MCF 10A (cell line): ENCODE measurements at regions of chr1 and their contacts with region 1.

Region 1: DNA sequence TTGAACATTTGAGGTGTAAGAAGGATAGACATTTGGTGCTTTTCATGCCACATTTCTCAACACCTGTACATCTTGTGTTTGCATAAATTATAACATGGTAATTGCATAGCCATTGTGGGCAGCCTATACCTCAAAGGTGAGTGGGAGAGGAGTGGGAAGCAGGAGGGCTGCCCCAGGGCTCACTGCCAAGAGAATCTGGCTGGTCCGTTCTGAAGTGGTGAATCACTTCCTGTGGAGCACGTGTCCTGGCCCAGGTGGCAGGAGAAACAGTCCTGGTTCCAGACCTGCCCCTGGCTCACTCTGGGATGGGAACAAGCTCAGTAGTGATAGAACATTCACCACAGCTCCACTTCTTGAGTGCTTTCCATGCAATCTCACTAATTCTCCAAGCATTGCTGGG is 11.6 kb upstream of the OLFML2B start:
- DNase-seq: peak; percentile 89
- H3K4me3 Mint-ChIP-seq: no peak overlapping the region
- H3K27ac Mint-ChIP-seq: no peak overlapping the region
- H3K4me1 Mint-ChIP-seq: peaks cover under 1% of the 10 kb centered on the region
- H3K27me3 Mint-ChIP-seq: peaks cover 11% of the 10 kb centered on the region
- CTCF ChIP-seq: no peak

Region 2: DNA sequence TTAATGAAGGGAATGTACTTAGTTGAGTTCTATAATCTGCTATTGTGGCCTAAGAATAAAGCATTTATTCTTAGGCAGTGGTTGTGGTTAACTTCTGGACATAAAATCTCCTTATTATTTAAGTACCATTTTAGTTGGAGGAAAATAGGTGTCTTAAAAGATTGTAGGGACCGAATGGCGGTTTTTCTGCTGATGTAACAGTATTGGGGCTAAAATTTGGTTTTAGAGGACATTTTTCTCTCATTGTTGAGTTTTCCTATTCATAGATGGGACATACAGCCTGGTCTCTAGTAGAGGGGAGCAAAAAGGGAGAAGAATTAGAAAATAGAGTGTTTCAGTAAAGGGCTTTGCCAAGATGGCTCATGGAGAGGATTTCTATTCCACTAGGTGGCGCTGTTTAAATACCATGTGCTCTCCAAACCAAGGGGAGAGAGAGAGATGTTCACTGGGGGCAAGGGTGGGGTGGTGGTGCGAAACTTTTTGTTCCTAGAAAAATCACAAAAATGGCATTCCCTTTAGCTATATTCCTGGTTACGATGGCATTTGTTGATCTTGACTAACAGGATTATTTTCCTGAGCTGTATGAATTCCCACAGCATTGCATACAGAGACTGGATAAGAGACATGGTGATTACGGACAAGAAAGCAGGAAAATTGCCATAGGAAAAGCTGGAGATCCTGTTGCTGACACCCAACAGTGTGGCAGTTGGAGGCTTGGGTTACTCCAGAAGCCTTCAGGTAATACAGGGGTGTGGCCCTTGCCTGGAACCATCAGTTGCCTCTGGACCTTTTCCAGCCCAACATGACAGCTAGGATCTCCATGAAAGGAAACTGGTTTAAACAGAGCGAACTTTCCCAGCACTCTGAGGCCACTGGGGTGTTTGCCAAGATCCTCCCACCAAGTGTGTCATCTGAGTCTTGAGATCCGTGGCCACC is 548.2 kb before region 1 on chr1:
- CTCF ChIA-PET with region 1: interaction called, 3 read pairs
- POLR2A ChIA-PET with region 1: no interaction called
- intact Hi-C with region 1: loop called (anchors 10 kb)
- DNase-seq: peak; percentile 98
- H3K4me3 Mint-ChIP-seq: peak overlapping the region; percentile 41
- H3K27ac Mint-ChIP-seq: no peak overlapping the region
- H3K4me1 Mint-ChIP-seq: no peaks in the 10 kb centered on the region
- H3K27me3 Mint-ChIP-seq: peaks cover 39% of the 10 kb centered on the region
- CTCF ChIP-seq: peak; percentile 87

Region 3: GRCh38 chr1:161787355-161787754 is 247.9 kb before region 1 on chr1:
- CTCF ChIA-PET with region 1: interaction called, 508 read pairs
- POLR2A ChIA-PET with region 1: interaction called, 67 read pairs
- intact Hi-C with region 1: loop called (anchors 1 kb)
- DNase-seq: no peak
- H3K4me3 Mint-ChIP-seq: no peak overlapping the region
- H3K27ac Mint-ChIP-seq: peak overlapping the region; percentile 8
- H3K4me1 Mint-ChIP-seq: peaks cover 11% of the 10 kb centered on the region
- H3K27me3 Mint-ChIP-seq: no peaks in the 10 kb centered on the region
- CTCF ChIP-seq: no peak

Region 4: DNA sequence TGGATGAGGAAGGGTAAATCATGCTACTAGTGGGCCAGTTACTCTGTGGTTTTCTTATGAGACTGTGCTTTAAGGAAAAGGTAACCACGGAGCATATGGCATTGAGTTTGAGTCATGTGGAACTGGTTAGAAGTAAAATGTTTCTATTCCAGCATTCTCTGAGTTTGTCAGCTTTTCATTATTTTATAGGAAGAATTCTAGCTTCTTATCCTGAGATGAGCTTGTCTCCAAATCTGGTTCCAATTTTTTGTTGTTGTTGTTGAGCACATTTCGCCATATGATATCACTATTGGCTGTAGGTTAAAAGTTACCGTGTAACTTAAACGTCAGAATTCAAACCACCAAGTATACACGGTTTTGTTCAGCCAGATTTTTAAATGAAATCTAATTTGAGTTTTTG is 199.2 kb before region 1 on chr1:
- CTCF ChIA-PET with region 1: interaction called, 11 read pairs
- POLR2A ChIA-PET with region 1: no interaction called
- intact Hi-C with region 1: no loop called
- DNase-seq: no peak
- H3K4me3 Mint-ChIP-seq: no peak overlapping the region
- H3K27ac Mint-ChIP-seq: no peak overlapping the region
- H3K4me1 Mint-ChIP-seq: no peaks in the 10 kb centered on the region
- H3K27me3 Mint-ChIP-seq: no peaks in the 10 kb centered on the region
- CTCF ChIP-seq: no peak

Region 5: DNA sequence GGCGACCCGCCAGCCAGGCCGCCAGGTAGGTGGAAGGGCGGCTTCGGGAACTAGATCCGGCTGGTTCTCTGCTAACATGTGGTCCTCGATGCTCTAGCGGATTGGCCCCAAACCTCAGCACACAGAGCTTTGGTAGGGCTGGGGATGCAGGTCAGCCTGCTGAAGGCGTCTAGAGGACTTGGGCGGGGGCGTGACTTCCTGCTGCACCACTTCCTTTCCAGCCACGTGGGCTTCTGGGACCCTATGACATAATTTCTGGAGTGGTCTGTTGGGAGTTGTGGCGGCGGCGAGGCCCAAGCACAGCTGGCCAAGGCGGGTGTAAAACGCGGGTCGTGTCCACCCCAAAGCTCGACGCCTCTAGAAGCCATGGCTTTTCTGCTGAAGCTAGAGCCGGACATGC is 144.7 kb before region 1 on chr1:
- CTCF ChIA-PET with region 1: interaction called, 12 read pairs
- POLR2A ChIA-PET with region 1: no interaction called
- intact Hi-C with region 1: no loop called
- DNase-seq: no peak
- H3K4me3 Mint-ChIP-seq: no peak overlapping the region
- H3K27ac Mint-ChIP-seq: no peak overlapping the region
- H3K4me1 Mint-ChIP-seq: peaks cover 5% of the 10 kb centered on the region
- H3K27me3 Mint-ChIP-seq: no peaks in the 10 kb centered on the region
- CTCF ChIP-seq: no peak

Region 6: DNA sequence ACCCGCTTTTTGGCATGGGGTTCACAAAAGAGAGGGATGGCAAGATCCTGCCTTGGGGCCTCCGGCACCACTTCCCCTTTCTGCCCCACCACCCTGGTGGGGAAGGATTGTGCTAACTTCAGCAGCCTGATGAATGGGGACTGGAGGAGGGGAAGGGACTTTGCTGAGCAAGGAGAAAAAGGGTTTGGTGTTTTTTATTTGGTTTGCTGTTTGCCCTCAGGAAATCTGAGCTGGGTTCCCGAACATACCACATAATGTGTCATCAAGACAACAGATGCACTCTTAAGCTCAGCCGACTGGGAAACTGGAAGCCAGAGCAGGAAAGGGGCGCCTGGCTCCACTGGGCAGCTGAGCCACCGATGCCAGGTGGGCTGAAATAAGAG is 31.4 kb before region 1 on chr1:
- CTCF ChIA-PET with region 1: interaction called, 13 read pairs
- POLR2A ChIA-PET with region 1: no interaction called
- intact Hi-C with region 1: no loop called
- DNase-seq: peak; percentile 91
- H3K4me3 Mint-ChIP-seq: peak overlapping the region; percentile 13
- H3K27ac Mint-ChIP-seq: peak overlapping the region; percentile 46
- H3K4me1 Mint-ChIP-seq: peaks cover 17% of the 10 kb centered on the region
- H3K27me3 Mint-ChIP-seq: no peaks in the 10 kb centered on the region
- CTCF ChIP-seq: no peak

Region 7: GRCh38 chr1:162107911-162108310 is 72.7 kb after region 1 on chr1:
- CTCF ChIA-PET with region 1: no interaction called
- POLR2A ChIA-PET with region 1: no interaction called
- intact Hi-C with region 1: no loop called
- DNase-seq: no peak
- H3K4me3 Mint-ChIP-seq: no peak overlapping the region
- H3K27ac Mint-ChIP-seq: no peak overlapping the region
- H3K4me1 Mint-ChIP-seq: no peaks in the 10 kb centered on the region
- H3K27me3 Mint-ChIP-seq: no peaks in the 10 kb centered on the region
- CTCF ChIP-seq: no peak

Region 8: GRCh38 chr1:162285149-162285561 is 249.9 kb after region 1 on chr1:
- CTCF ChIA-PET with region 1: no interaction called
- POLR2A ChIA-PET with region 1: no interaction called
- intact Hi-C with region 1: no loop called
- DNase-seq: peak; percentile 63
- H3K4me3 Mint-ChIP-seq: no peak overlapping the region
- H3K27ac Mint-ChIP-seq: no peak overlapping the region
- H3K4me1 Mint-ChIP-seq: peaks cover 21% of the 10 kb centered on the region
- H3K27me3 Mint-ChIP-seq: no peaks in the 10 kb centered on the region
- CTCF ChIP-seq: no peak

Region 9: DNA sequence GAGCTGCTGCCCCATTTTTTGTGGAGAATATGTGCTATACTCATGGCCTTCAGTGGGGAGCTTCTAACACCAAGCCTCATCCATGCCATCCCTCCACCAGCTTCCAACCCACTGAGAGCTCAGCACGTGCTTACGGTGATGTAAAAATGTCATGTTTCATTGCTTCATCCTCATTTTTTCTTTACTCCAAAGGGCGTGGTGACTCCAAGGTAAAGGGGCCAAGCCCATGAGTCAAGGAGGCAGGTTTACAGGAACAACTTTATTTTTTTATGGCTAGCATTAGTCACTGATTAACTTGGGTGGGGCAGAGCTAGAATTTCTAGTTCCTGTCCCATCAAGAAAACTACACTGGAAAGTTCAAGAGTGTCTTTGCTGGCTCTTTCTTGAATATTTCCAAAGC is 346.1 kb after region 1 on chr1 and contains the start of gene C1orf226:
- CTCF ChIA-PET with region 1: interaction called, 16 read pairs
- POLR2A ChIA-PET with region 1: no interaction called
- intact Hi-C with region 1: no loop called
- DNase-seq: peak; percentile 95
- H3K4me3 Mint-ChIP-seq: peak within 1 kb of the TSS; percentile 26
- H3K27ac Mint-ChIP-seq: peak within 1 kb of the TSS; percentile 89
- H3K4me1 Mint-ChIP-seq: peaks cover 50% of the 10 kb centered on the region
- H3K27me3 Mint-ChIP-seq: no peaks in the 10 kb centered on the region
- CTCF ChIP-seq: no peak
- total RNA-seq, gene C1orf226: 3.1 and 3.3 TPM in 2 replicates